Right lobe of liver (tissue), 6 donors: ENCODE measurements at regions of chr15 and their contacts with region 1.

Region 1: DNA sequence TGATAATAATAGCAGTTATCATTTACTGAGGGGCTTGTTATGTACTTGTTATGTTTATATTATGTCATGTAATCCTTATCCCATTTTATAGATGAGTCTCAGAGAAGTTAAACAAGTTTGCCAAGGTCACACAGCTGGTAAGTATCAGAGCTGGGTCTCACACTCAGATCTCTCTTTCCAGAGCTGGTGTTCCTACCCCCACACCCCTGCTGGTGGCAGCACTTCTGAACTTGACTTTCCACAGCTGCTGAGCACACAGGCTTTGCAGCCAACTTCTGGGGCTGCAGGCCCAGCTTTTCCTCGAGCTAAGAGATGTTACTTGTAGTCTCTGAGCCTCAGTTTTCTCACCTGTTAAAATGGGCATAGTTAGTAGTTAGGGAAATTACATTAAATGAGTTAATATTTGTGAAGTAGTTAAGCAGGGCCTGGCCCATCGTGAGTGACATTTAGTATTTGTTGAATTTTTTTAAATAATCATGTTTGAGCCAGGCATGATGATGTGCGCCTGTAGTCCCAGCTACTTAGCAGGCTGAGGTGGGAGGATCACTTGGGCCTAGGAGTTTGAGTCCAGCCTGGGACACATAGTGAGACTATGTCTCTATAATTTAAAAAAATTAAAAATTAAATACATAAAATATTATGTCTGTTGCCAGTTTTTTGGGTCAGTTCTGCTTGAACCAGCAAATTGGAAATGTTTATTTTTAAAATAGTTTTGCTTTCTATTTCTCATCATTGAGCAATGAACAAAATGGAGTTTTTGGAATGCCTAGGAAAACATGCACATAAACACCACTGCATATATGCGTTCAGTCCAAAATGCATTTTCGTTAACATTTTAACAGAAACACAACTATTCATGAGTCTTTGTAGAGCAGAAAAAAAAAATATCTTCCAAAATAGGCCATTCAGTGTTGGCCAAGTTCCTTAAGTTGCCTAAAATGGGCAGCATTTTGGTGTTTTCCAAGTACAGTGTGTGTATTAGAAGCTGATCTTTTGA is 87.3 kb downstream of the SMAD6 start:
- DNase-seq: no peak
- ATAC-seq: peak; percentile 67 to 81 (median 72)
- H3K4me3 ChIP-seq: no peak overlapping the region
- H3K27ac ChIP-seq: no peak overlapping the region
- H3K4me1 ChIP-seq: no peaks in the 10 kb centered on the region
- H3K27me3 ChIP-seq: no peaks in the 10 kb centered on the region
- CTCF ChIP-seq: peak; percentile 37 to 58 (median 50)
- POLR2A ChIP-seq: no peak

Region 2: GRCh38 chr15:66841953-66842681 is 52.8 kb after region 1 on chr15:
- intact Hi-C with region 1: loop called in 1 of 2 experiments (anchors 10 kb)
- DNase-seq: peak; percentile 75 to 83 (median 81)
- ATAC-seq: peak; percentile 74 to 80 (median 76)
- H3K4me3 ChIP-seq: peak overlapping the region; percentile 32 to 53 (median 33)
- H3K27ac ChIP-seq: peak overlapping the region; percentile 39 to 71 (median 65)
- H3K4me1 ChIP-seq: peaks cover 0 to 10% (median 0%) of the 10 kb centered on the region in 4 donors
- H3K27me3 ChIP-seq: no peaks in the 10 kb centered on the region
- CTCF ChIP-seq: no peak
- POLR2A ChIP-seq: peak; percentile 51